Sigmoid colon (tissue), 7 donors: ENCODE measurements at regions of chr1 and their contacts with region 1.

Region 1: DNA sequence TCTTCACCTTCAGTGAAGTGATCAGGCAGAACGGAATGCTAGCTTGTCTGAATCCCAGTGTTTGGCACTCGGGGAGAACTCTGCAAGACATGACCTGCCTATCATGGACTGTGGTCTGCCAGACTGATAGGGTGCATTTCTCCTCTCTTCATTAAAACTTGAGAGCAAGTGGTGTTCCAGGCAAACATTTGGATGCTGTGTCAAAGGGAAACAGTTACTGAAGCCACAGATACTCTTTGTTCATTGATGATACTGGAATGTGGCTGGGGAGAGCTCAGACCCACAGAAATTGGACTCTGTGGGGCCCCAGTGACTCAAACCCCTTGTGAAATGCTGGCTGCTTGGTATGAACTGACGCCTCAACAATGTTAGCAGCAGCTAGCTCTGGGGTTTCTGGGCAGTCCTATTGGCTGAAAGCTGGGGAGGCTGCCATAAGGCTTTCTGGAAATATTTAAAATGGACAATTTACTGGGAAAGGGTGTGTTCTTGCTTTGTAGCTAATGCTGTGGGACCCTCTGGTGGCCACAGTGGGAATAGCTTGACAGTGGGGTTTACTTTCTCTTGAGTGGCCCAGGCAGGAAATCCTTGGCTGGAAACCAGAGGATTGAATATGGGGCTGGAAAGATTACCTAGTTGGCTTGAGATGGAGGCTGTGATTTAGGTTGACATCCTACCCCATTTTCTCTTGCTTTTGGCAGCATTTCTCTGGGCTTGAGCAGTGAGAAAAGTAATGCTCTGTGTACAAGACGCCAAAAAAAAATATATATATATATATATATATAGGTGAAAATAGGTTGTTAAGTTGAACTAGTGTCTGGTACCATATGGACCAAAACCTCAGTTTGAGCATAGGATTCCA is 8.0 kb upstream of the S100A10 start:
- DNase-seq: peak; percentile 92
- H3K4me3 ChIP-seq: no peak overlapping the region
- H3K27ac ChIP-seq: peak overlapping the region; percentile 46 to 67 (median 56)
- H3K4me1 ChIP-seq: peaks cover 0 to 10% (median 3%) of the 10 kb centered on the region in 4 donors
- H3K27me3 ChIP-seq: no peaks in the 10 kb centered on the region
- CTCF ChIP-seq: peak; percentile 61 to 95 (median 93)
- EP300 ChIP-seq: no peak
- POLR2A ChIP-seq: no peak

Region 2: GRCh38 chr1:151619489-151620093 is 382.0 kb before region 1 on chr1:
- intact Hi-C with region 1: no loop called
- DNase-seq: no peak
- H3K4me3 ChIP-seq: no peak overlapping the region
- H3K27ac ChIP-seq: peak overlapping the region; percentile 73 to 99 (median 86)
- H3K4me1 ChIP-seq: peaks cover 0 to 73% (median 61%) of the 10 kb centered on the region in 4 donors
- H3K27me3 ChIP-seq: no peaks in the 10 kb centered on the region
- CTCF ChIP-seq: no peak
- EP300 ChIP-seq: no peak
- POLR2A ChIP-seq: no peak

Region 3: GRCh38 chr1:151934048-151934493 is 67.5 kb before region 1 on chr1:
- intact Hi-C with region 1: loop called (anchors 1 kb)
- DNase-seq: no peak
- H3K4me3 ChIP-seq: no peak overlapping the region
- H3K27ac ChIP-seq: no peak overlapping the region
- H3K4me1 ChIP-seq: no peaks in the 10 kb centered on the region
- H3K27me3 ChIP-seq: no peaks in the 10 kb centered on the region
- CTCF ChIP-seq: peak; percentile 65 to 77 (median 70)
- EP300 ChIP-seq: no peak
- POLR2A ChIP-seq: no peak

Region 4: DNA sequence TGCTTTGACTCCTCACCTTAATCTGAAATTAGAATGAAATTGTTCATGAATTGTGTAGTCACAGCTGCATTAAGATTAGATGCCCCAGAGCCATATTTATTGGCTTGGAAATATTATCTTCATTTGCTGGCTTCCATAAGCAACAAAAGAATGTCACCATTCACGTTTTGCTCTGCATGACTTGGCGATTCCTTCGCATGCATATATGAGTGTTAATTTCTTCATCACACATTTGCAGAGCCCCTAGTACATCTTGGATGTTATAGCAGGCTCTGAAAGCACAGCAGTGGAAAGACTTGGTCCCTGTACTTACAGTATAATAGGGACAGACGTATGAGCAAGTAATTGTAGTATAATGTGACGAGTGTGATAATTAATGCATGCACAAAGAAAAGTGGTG is 29.1 kb before region 1 on chr1:
- intact Hi-C with region 1: loop called (anchors 2 kb)
- DNase-seq: no peak
- H3K4me3 ChIP-seq: no peak overlapping the region
- H3K27ac ChIP-seq: peak overlapping the region in 3 of 4 donors; percentile 44 to 59 (median 58)
- H3K4me1 ChIP-seq: peaks cover 0 to 24% (median 22%) of the 10 kb centered on the region in 4 donors
- H3K27me3 ChIP-seq: no peaks in the 10 kb centered on the region
- CTCF ChIP-seq: no peak
- EP300 ChIP-seq: no peak
- POLR2A ChIP-seq: no peak

Region 5: GRCh38 chr1:152227310-152227928 is 225.8 kb after region 1 on chr1:
- intact Hi-C with region 1: no loop called
- DNase-seq: no peak
- H3K4me3 ChIP-seq: no peak overlapping the region
- H3K27ac ChIP-seq: no peak overlapping the region
- H3K4me1 ChIP-seq: no peaks in the 10 kb centered on the region
- H3K27me3 ChIP-seq: no peaks in the 10 kb centered on the region
- CTCF ChIP-seq: no peak
- EP300 ChIP-seq: no peak
- POLR2A ChIP-seq: no peak